Activated naive CD4-positive, alpha-beta T cell treated with anti-CD3 and anti-CD28 coated beads, Interleukin-2, amount 10 ng/mL, durations not matched to agents 7 days and 5 days (primary cell): ENCODE measurements at regions of chr9 and their contacts with region 1.

Region 1: DNA sequence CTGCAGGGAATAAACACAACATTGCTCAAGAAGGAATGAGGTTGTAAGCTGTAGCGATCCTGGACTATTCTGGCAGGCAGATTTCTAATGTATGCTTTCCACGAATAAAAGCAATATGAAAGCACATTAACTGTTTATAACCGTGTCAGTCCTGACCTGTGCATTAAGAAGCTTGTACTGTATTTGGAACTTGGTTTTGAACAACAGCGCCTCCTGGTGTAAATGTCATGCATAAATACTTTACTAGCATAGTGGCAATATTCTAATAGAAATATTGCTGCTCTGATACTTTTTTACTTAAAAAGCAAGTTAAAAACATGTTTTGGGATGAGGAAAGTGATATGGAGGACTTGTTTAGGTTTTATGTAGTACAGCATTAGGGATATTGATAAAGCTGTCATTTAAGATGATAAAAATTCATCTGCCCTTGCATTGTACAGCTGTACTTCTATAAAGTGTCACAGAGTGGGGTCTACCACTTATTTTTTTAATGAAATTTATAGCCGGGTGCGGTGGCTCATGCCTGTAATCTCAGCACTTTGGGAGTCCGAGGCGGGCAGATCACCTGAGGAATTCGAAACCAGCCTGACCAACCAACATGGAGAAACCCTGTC is 70.7 kb upstream of the GNE start:
- DNase-seq: peak; percentile 57
- H3K4me3 Mint-ChIP-seq: no peak overlapping the region
- H3K27ac Mint-ChIP-seq: no peak overlapping the region
- H3K4me1 Mint-ChIP-seq: peaks cover 2% of the 10 kb centered on the region
- H3K27me3 Mint-ChIP-seq: no peaks in the 10 kb centered on the region

Region 2: GRCh38 chr9:36023260-36024048 is 305.5 kb before region 1 on chr9:
- CTCF ChIA-PET with region 1: no interaction called
- DNase-seq: peak; percentile 81
- H3K4me3 Mint-ChIP-seq: no peak overlapping the region
- H3K27ac Mint-ChIP-seq: peak overlapping the region; percentile 7
- H3K4me1 Mint-ChIP-seq: no peaks in the 10 kb centered on the region
- H3K27me3 Mint-ChIP-seq: peaks cover 15% of the 10 kb centered on the region

Region 3: GRCh38 chr9:36102742-36103495 is 226.0 kb before region 1 on chr9:
- CTCF ChIA-PET with region 1: interaction called, 12 read pairs
- DNase-seq: peak; percentile 93
- H3K4me3 Mint-ChIP-seq: no peak overlapping the region
- H3K27ac Mint-ChIP-seq: no peak overlapping the region
- H3K4me1 Mint-ChIP-seq: peaks cover 9% of the 10 kb centered on the region
- H3K27me3 Mint-ChIP-seq: no peaks in the 10 kb centered on the region

Region 4: DNA sequence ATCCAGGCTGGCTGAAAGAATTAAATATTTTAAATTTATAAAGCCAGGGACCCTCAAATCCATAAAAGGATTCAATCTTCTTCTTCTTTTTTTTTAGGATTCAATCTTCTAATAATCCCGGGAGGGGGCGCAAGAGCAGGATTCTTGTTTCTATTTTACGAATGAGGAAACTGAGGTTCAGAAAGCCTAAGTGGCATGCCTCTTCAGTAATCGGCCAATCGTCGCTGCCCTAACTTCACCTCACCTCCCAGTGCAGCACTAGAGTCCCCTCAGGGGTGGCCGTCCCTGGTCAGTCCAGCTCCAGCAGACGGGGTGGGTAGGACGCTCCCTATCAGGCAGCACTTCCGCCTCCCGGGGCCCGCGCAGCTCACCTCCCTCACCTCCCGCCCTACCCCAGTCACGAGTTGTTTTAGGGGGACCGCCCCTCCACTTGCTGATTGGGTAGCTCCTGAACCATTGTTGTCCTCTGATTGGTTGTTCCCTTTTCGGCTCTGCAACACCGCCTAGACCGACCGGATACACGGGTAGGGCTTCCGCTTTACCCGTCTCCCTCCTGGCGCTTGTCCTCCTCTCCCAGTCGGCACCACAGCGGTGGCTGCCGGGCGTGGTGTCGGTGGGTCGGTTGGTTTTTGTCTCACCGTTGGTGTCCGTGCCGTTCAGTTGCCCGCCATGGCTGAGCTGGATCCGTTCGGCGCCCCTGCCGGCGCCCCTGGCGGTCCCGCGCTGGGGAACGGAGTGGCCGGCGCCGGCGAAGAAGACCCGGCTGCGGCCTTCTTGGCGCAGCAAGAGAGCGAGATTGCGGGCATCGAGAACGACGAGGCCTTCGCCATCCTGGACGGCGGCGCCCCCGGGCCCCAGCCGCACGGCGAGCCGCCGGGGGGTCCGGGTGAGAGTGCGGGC is 138.3 kb before region 1 on chr9 and contains the start of gene CLTA:
- CTCF ChIA-PET with region 1: interaction called, 18 read pairs
- DNase-seq: peak; percentile 97
- H3K4me3 Mint-ChIP-seq: peak within 1 kb of the TSS; percentile 92
- H3K27ac Mint-ChIP-seq: peak within 1 kb of the TSS; percentile 91
- H3K4me1 Mint-ChIP-seq: peaks cover 48% of the 10 kb centered on the region
- H3K27me3 Mint-ChIP-seq: peaks cover 19% of the 10 kb centered on the region

Region 5: DNA sequence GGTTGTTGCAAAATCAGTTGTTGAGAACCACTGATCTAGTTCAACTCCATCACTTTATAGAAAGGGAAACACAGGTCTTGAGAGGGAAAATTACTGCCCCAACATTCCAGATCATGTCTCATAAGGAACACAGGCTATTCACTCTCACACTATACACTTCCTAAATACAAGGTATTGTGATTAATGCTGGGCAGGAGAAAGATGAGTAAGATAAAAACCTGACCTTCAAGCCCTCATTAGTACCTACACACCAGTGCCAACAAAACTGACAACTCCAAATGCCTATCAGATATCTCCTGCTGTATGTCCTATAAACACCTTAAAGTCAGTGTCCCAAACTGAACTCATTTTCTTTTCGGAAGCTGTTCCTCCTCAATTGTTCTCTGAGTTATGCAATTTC is 78.8 kb before region 1 on chr9:
- CTCF ChIA-PET with region 1: interaction called, 81 read pairs
- DNase-seq: no peak
- H3K4me3 Mint-ChIP-seq: no peak overlapping the region
- H3K27ac Mint-ChIP-seq: no peak overlapping the region
- H3K4me1 Mint-ChIP-seq: no peaks in the 10 kb centered on the region
- H3K27me3 Mint-ChIP-seq: no peaks in the 10 kb centered on the region